ENCODE measurements at regions of chr9 and their contacts with region 1.

Region 1: GRCh38 chr9:115593587-115594091 is 475.7 kb upstream of the TNC start:
- DNase-seq: no peak
- ATAC-seq: peak; percentile 39
- H3K4me3 Mint-ChIP-seq: no peak overlapping the region
- H3K27ac Mint-ChIP-seq: no peak overlapping the region
- H3K4me1 Mint-ChIP-seq: no peaks in the 10 kb centered on the region
- H3K27me3 Mint-ChIP-seq: peaks cover 8% of the 10 kb centered on the region

Region 2: DNA sequence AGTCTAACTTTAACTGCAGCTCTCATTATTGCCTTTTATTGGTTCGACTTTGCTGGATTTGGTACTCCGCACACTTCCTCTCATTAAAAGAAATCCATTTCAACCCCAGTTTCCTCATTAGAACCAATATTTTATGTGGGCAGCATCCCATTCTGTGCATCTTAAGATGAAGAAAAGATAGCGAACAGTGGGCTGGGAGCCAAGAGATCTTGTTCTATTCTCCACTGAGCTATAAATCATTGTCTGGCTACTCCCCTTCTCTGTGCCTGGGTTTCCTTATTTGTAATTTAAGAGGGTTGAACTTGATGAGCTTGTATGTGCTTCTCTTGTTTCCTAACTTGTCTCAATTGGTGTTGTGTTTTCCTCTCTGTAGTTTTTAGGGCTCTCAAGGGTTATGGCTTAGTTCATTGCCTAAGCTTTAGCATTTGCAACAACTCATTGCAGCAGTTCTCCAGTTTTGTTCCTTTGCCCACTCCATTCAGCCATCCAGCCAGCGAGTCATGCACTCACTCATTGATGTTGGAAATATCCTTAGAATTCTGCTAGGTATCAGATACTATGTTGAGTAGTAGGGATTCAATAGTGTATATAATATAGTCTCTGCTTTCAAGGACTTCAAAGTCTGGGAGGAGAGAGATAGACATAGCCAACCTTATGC is 202.3 kb before region 1 on chr9:
- CTCF ChIA-PET with region 1: no interaction called
- POLR2A ChIA-PET with region 1: no interaction called
- DNase-seq: no peak
- ATAC-seq: no peak
- H3K4me3 Mint-ChIP-seq: no peak overlapping the region
- H3K27ac Mint-ChIP-seq: no peak overlapping the region
- H3K4me1 Mint-ChIP-seq: peaks cover 11% of the 10 kb centered on the region
- H3K27me3 Mint-ChIP-seq: peaks cover 10% of the 10 kb centered on the region

Region 3: GRCh38 chr9:115604831-115605483 is 11.3 kb after region 1 on chr9:
- CTCF ChIA-PET with region 1: interaction called, 12 read pairs
- POLR2A ChIA-PET with region 1: no interaction called
- DNase-seq: no peak
- ATAC-seq: no peak
- H3K4me3 Mint-ChIP-seq: no peak overlapping the region
- H3K27ac Mint-ChIP-seq: no peak overlapping the region
- H3K4me1 Mint-ChIP-seq: no peaks in the 10 kb centered on the region
- H3K27me3 Mint-ChIP-seq: no peaks in the 10 kb centered on the region

Region 4: GRCh38 chr9:115643948-115644727 is 50.5 kb after region 1 on chr9:
- CTCF ChIA-PET with region 1: no interaction called
- POLR2A ChIA-PET with region 1: no interaction called
- DNase-seq: no peak
- ATAC-seq: no peak
- H3K4me3 Mint-ChIP-seq: no peak overlapping the region
- H3K27ac Mint-ChIP-seq: no peak overlapping the region
- H3K4me1 Mint-ChIP-seq: no peaks in the 10 kb centered on the region
- H3K27me3 Mint-ChIP-seq: no peaks in the 10 kb centered on the region

Measured in activated CD8-positive, alpha-beta T cell treated with anti-CD3 and anti-CD28 coated beads, Interleukin-2, amount 10 ng/mL, durations not matched to agents 7 days and 5 days (primary cell).